ENCODE measurements at regions of chr12 and their contacts with region 1.

Region 1: GRCh38 chr12:57005980-57006808 is at the start of gene ZBTB39:
- DNase-seq: peak; percentile 50 to 76 (median 68)
- H3K4me3 ChIP-seq: peak within 1 kb of the TSS; percentile 44 to 60
- H3K4me3 Mint-ChIP-seq: peak within 1 kb of the TSS; percentile 90 to 98 (median 96)
- H3K27ac ChIP-seq: peak within 1 kb of the TSS; percentile 69
- H3K27ac Mint-ChIP-seq: peak within 1 kb of the TSS; percentile 83 to 96 (median 95)
- H3K4me1 ChIP-seq: peaks cover 52% of the 10 kb centered on the region
- H3K4me1 Mint-ChIP-seq: peaks cover 36 to 67% (median 52%) of the 10 kb centered on the region in 4 donors
- H3K27me3 ChIP-seq: no peaks in the 10 kb centered on the region
- H3K27me3 Mint-ChIP-seq: no peaks in the 10 kb centered on the region
- total RNA-seq, gene ZBTB39: 10.8 to 12.2 TPM

Region 2: DNA sequence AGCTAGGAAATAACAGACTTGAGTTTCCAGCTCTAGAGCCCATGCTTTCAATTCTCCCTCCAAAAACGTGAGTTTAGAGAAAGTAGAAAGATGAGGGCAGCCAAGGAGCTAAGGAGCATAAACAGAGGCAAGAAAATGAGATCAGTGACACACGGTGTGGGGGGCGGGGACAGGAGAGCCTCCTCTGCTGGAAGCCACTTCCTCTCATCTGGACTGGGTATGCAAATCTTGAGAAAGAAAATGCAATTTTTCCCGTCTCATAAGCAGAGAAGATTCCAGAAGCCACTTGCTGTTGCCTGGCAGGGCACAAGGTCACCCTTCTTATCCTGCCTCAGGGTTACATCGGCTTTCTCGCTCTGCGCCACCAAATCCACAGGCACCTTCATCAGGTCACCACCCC is 1363.5 kb before region 1 on chr12:
- CTCF ChIA-PET with region 1: no interaction called
- POLR2A ChIA-PET with region 1: no interaction called
- intact Hi-C with region 1: no loop called
- DNase-seq: no peak
- H3K4me3 ChIP-seq: no peak overlapping the region
- H3K4me3 Mint-ChIP-seq: peak overlapping the region in 1 of 8 donors; percentile 37
- H3K27ac ChIP-seq: no peak overlapping the region
- H3K27ac Mint-ChIP-seq: peak overlapping the region in 3 of 7 donors; percentile 50 to 83 (median 57)
- H3K4me1 ChIP-seq: peaks cover 21% of the 10 kb centered on the region
- H3K4me1 Mint-ChIP-seq: peaks cover 14 to 31% (median 22%) of the 10 kb centered on the region in 4 donors
- H3K27me3 ChIP-seq: no peaks in the 10 kb centered on the region
- H3K27me3 Mint-ChIP-seq: peaks cover 0 to 4% of the 10 kb centered on the region in 2 donors

Region 3: DNA sequence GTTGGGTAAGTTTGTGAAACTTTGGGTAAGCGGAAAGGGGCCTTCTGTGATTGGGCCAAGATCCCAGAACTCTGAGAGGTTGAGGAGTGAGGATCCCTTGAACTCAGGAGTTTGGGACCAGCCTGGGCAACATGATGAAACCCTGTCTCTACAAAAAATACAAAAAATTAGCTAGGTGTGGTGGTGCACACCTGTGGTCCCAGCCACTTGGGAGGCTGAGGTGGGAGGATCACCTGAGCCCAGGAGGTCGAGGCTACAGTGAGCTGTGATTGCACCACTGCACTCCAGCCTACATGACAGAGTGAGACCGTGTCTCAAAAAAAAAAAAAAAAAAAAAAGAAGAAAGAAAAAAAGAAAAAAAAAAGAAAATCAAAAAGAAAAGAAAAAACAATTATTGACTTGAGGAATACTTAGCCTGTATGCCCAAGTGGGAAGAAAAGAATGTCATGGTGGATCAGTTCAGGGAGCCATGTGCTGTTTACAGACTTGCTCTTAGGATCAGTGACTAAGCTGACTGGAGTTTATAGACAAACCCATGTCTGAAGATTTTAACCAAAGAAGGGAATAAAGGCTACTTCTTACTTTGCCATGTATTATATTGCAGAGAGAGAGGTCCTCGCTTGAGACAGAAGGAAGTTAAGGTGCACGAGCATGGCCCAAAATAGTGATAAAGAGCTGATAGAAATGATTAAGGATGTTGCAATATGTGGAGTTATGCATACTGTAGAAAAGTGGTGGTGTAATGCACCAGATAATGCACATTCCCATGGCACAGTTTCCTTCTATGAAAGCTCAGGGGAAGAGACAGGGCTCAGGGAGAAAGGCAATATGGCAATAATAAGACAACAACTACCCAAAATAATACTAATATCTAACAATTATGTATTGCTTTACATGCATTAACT is 242.2 kb before region 1 on chr12:
- CTCF ChIA-PET with region 1: interaction called, 23 read pairs
- POLR2A ChIA-PET with region 1: no interaction called
- intact Hi-C with region 1: loop called (anchors 5 kb)
- DNase-seq: no peak
- H3K4me3 ChIP-seq: no peak overlapping the region
- H3K4me3 Mint-ChIP-seq: no peak overlapping the region
- H3K27ac ChIP-seq: no peak overlapping the region
- H3K27ac Mint-ChIP-seq: no peak overlapping the region
- H3K4me1 ChIP-seq: no peaks in the 10 kb centered on the region
- H3K4me1 Mint-ChIP-seq: no peaks in the 10 kb centered on the region
- H3K27me3 ChIP-seq: no peaks in the 10 kb centered on the region
- H3K27me3 Mint-ChIP-seq: peaks cover 2% of the 10 kb centered on the region in 2 donors

Region 4: DNA sequence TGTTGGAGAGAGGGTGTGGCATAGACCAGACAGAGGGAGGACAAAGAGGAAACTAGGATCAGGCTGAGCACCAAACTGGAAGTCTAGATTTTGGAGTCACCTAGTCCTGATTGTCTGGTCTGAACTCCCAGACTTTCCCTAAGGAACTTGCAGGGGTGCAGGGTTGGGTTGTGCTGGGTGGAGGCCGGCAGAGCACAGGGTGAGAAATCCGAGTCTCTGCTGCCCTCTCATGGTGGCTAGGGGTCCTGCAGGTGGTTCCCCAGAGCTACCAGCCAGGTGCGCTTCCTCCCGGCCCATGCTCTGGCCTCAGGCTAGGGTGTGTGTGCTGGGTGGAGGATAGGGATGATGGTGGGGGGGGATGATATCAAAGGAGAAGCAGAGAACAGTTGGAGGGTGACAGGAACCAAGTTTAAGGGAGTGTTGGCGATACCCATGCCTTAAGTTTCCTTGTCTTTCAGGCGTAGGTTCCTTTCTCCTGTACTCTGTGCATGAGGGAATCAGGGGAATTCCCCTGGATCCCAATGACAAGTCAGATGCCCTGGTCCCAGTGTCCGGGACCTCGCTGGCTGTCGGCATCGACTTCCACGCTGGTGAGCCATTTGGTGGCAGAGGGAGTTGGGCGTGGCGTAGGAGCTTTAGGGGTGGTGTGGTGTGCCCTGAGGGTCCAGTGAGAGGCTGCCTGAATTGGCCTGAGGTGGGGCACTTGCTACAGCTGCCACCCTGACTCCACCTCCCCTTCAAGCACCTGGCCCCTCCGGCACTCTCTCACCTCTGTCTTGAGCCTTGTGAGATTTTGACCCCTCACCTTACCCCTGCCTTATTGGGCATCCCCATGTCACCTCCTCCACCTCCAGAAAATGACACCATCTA is 177.0 kb after region 1 on chr12:
- CTCF ChIA-PET with region 1: no interaction called
- POLR2A ChIA-PET with region 1: no interaction called
- intact Hi-C with region 1: loop called (anchors 5 kb)
- DNase-seq: peak; percentile 71 to 75 (median 73)
- H3K4me3 ChIP-seq: no peak overlapping the region
- H3K4me3 Mint-ChIP-seq: peak overlapping the region in 1 of 8 donors; percentile 25
- H3K27ac ChIP-seq: no peak overlapping the region
- H3K27ac Mint-ChIP-seq: peak overlapping the region in 1 of 7 donors; percentile 70
- H3K4me1 ChIP-seq: no peaks in the 10 kb centered on the region
- H3K4me1 Mint-ChIP-seq: peaks cover 2 to 7% (median 5%) of the 10 kb centered on the region in 4 donors
- H3K27me3 ChIP-seq: no peaks in the 10 kb centered on the region
- H3K27me3 Mint-ChIP-seq: peaks cover 0 to 2% of the 10 kb centered on the region in 2 donors

Measured in CD4-positive, alpha-beta memory T cell (primary cell).